CD8-positive, alpha-beta T cell (primary cell): ENCODE measurements at regions of chr15 and their contacts with region 1.

Region 1: GRCh38 chr15:90320061-90320884 is 31.8 kb upstream of the ZNF774 start:
- DNase-seq: peak; percentile 31 to 85 (median 64)
- ATAC-seq: peak; percentile 99
- H3K4me3 ChIP-seq: no peak overlapping the region
- H3K4me3 Mint-ChIP-seq: no peak overlapping the region
- H3K27ac ChIP-seq: no peak overlapping the region
- H3K27ac Mint-ChIP-seq: no peak overlapping the region
- H3K4me1 ChIP-seq: no peaks in the 10 kb centered on the region
- H3K4me1 Mint-ChIP-seq: peaks cover 5% of the 10 kb centered on the region
- H3K27me3 ChIP-seq: no peaks in the 10 kb centered on the region
- H3K27me3 Mint-ChIP-seq: peaks cover 3% of the 10 kb centered on the region
- CTCF ChIP-seq: peak; percentile 98

Region 2: GRCh38 chr15:89485855-89486361 is 834.4 kb before region 1 on chr15:
- CTCF ChIA-PET with region 1: no interaction called
- POLR2A ChIA-PET with region 1: no interaction called
- intact Hi-C with region 1: no loop called
- DNase-seq: no peak
- ATAC-seq: no peak
- H3K4me3 ChIP-seq: no peak overlapping the region
- H3K4me3 Mint-ChIP-seq: no peak overlapping the region
- H3K27ac ChIP-seq: no peak overlapping the region
- H3K27ac Mint-ChIP-seq: no peak overlapping the region
- H3K4me1 ChIP-seq: peaks cover 4% of the 10 kb centered on the region
- H3K4me1 Mint-ChIP-seq: peaks cover 9% of the 10 kb centered on the region
- H3K27me3 ChIP-seq: peaks cover 0 to 6% of the 10 kb centered on the region in 2 experiments
- H3K27me3 Mint-ChIP-seq: peaks cover 56% of the 10 kb centered on the region
- CTCF ChIP-seq: no peak

Region 3: DNA sequence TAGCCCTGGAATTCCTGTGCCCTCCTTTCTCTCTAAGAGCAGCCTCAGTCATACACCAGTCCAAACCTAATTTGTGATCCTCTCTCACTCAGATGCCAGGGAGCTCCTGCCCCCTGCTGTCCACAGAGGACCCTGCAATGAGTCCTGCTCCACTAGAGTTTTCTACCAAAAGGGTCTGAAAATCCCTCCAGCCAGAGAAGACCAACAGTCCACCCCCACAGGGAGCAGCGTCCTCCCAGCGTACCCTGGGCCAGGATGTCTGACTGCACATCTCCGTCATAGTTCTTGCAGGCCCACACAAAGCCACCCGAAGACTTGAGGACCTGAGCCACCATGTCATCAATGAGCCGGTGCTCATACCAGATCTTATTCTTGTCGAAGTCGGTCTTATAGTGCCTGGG is 233.4 kb before region 1 on chr15:
- CTCF ChIA-PET with region 1: no interaction called
- POLR2A ChIA-PET with region 1: no interaction called
- intact Hi-C with region 1: no loop called
- DNase-seq: peak in 8 of 9 experiments; percentile 27 to 64 (median 48)
- ATAC-seq: peak; percentile 91
- H3K4me3 ChIP-seq: no peak overlapping the region
- H3K4me3 Mint-ChIP-seq: no peak overlapping the region
- H3K27ac ChIP-seq: no peak overlapping the region
- H3K27ac Mint-ChIP-seq: peak overlapping the region; percentile 70
- H3K4me1 ChIP-seq: no peaks in the 10 kb centered on the region
- H3K4me1 Mint-ChIP-seq: peaks cover 4% of the 10 kb centered on the region
- H3K27me3 ChIP-seq: no peaks in the 10 kb centered on the region
- H3K27me3 Mint-ChIP-seq: no peaks in the 10 kb centered on the region
- CTCF ChIP-seq: peak; percentile 59

Region 4: DNA sequence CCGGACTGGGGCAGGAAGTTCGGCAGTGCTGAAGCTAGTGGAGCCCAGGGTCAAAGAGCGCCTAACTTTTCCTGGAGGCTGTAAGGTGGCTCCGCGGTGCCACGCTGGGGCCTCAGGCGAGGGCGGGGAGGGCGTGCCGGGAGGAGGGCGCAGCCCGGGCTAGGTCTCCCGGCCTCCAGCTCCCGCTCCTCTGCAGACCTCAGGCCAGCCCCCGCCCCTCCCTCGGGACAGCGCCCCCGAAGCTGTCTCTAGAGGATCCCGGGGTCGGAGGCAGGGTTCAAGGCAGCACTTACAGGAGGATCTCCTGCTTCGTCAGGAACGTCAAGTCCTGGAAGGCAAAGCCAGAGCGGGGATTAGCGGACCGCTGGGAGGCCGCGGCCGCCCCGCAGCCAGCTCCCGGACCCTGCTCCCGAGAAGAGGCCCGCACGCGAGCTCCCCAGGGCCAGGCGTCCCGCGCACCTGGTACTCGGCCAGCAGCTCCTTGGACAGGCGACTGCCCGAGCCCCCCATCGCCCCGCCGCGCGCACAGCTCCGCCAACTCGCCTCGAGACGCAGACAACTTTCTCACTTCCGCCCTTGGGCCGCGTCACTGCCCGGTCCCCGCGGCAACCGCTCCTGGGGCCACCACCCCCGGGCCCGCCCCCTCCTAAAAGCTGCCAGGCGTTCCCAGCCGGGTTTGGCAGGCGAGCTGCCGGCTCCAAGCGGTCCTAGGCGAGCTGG is 86.7 kb before region 1 on chr15 and contains the start of gene CIB1:
- CTCF ChIA-PET with region 1: no interaction called
- POLR2A ChIA-PET with region 1: no interaction called
- intact Hi-C with region 1: no loop called
- DNase-seq: peak in 8 of 9 experiments; percentile 32 to 98 (median 94)
- ATAC-seq: peak; percentile 76
- H3K4me3 ChIP-seq: peak within 1 kb of the TSS; percentile 73 to 86
- H3K4me3 Mint-ChIP-seq: peak within 1 kb of the TSS; percentile 94
- H3K27ac ChIP-seq: peak within 1 kb of the TSS; percentile 93
- H3K27ac Mint-ChIP-seq: peak within 1 kb of the TSS; percentile 98
- H3K4me1 ChIP-seq: peaks cover 47% of the 10 kb centered on the region
- H3K4me1 Mint-ChIP-seq: peaks cover 60% of the 10 kb centered on the region
- H3K27me3 ChIP-seq: no peaks in the 10 kb centered on the region
- H3K27me3 Mint-ChIP-seq: no peaks in the 10 kb centered on the region
- CTCF ChIP-seq: no peak
- total RNA-seq, gene CIB1: 251 to 268 TPM

Region 5: DNA sequence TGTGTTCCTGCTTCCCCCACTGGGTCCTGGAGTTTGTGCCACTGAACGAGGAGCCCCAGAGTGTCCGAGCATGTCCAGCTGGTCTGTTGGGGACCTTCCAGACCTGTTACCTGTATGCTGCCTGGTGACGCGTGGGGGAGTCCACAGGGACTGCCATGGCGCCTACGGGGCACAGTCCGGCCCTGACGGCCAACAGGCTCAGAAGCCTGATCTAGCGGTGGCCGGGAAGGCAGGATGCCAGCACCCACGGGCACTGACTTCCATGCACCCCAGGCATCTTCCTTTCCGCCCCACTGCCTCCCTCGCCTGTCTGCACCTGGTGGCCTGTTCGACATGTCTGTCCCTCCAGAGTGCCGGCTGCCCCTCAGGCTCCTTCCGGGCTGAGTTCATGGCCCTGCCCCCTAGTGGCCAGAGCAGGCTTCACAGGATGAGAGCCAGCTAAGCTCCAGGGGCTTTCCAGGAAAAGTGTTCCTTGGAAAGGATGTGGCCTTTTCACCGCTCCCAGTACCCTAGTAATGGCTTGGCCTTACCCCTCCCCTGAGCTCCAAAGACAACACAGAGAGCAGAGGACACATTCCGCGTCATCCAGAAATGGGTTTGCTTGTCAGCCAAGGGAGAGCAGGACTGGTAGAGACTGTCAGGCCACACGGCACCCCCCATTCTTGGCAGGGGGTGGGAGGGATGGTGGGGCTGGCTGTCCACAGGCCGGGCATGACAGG is 19.1 kb before region 1 on chr15:
- CTCF ChIA-PET with region 1: interaction called, 54 read pairs
- POLR2A ChIA-PET with region 1: no interaction called
- intact Hi-C with region 1: no loop called
- DNase-seq: peak; percentile 18 to 72 (median 61)
- ATAC-seq: peak; percentile 49
- H3K4me3 ChIP-seq: no peak overlapping the region
- H3K4me3 Mint-ChIP-seq: no peak overlapping the region
- H3K27ac ChIP-seq: no peak overlapping the region
- H3K27ac Mint-ChIP-seq: no peak overlapping the region
- H3K4me1 ChIP-seq: peaks cover 4% of the 10 kb centered on the region
- H3K4me1 Mint-ChIP-seq: peaks cover 9% of the 10 kb centered on the region
- H3K27me3 ChIP-seq: no peaks in the 10 kb centered on the region
- H3K27me3 Mint-ChIP-seq: no peaks in the 10 kb centered on the region
- CTCF ChIP-seq: peak; percentile 81

Region 6: GRCh38 chr15:90345857-90346256 is 25.6 kb after region 1 on chr15:
- CTCF ChIA-PET with region 1: interaction called, 14 read pairs
- POLR2A ChIA-PET with region 1: no interaction called
- intact Hi-C with region 1: no loop called
- DNase-seq: no peak
- ATAC-seq: no peak
- H3K4me3 ChIP-seq: no peak overlapping the region
- H3K4me3 Mint-ChIP-seq: no peak overlapping the region
- H3K27ac ChIP-seq: no peak overlapping the region
- H3K27ac Mint-ChIP-seq: no peak overlapping the region
- H3K4me1 ChIP-seq: peaks cover 10% of the 10 kb centered on the region
- H3K4me1 Mint-ChIP-seq: peaks cover 12% of the 10 kb centered on the region
- H3K27me3 ChIP-seq: no peaks in the 10 kb centered on the region
- H3K27me3 Mint-ChIP-seq: no peaks in the 10 kb centered on the region
- CTCF ChIP-seq: no peak

Region 7: DNA sequence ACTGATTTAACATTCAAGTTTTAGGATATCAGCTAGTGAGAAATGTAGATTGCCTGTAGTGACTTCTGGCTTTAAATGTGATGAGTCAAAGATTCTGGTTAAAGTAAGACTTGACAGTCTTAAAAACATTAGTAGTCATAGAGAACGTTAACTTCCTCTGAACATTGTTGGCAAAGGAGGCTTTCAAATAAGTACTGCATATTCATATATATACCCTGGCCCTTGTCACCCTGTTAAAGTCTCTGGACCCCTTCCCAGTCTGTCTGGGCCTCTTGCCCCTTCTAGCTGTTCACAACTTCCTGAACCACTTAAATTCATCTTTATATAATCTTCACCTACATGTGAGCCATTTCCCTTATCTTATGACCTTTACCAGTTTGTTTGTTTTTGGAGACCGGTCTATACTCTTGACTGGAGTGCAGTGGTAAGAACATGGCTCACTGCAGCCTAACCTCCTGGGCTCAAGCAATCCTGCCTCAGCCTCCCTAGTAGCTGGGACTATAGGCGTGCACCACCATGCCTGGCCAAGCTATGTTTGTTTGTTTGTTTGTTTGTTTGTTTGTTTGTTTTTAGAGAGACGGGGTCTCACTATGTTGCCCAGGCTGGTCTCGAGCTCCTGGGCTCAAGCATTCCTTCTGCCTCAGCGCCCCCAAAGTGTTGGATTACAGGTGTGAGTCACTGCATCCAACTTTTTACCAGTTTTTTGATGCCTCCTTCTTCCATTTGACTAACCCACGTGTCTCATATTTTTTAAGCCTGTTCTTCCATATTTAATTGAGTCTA is 145.1 kb after region 1 on chr15:
- CTCF ChIA-PET with region 1: interaction called, 13 read pairs
- POLR2A ChIA-PET with region 1: no interaction called
- intact Hi-C with region 1: no loop called
- DNase-seq: no peak
- ATAC-seq: no peak
- H3K4me3 ChIP-seq: no peak overlapping the region
- H3K4me3 Mint-ChIP-seq: no peak overlapping the region
- H3K27ac ChIP-seq: no peak overlapping the region
- H3K27ac Mint-ChIP-seq: no peak overlapping the region
- H3K4me1 ChIP-seq: no peaks in the 10 kb centered on the region
- H3K4me1 Mint-ChIP-seq: peaks cover 8% of the 10 kb centered on the region
- H3K27me3 ChIP-seq: no peaks in the 10 kb centered on the region
- H3K27me3 Mint-ChIP-seq: no peaks in the 10 kb centered on the region
- CTCF ChIP-seq: no peak

Region 8: GRCh38 chr15:90512981-90513380 is 192.7 kb after region 1 on chr15:
- CTCF ChIA-PET with region 1: interaction called, 14 read pairs
- POLR2A ChIA-PET with region 1: no interaction called
- intact Hi-C with region 1: no loop called
- DNase-seq: no peak
- ATAC-seq: no peak
- H3K4me3 ChIP-seq: no peak overlapping the region
- H3K4me3 Mint-ChIP-seq: no peak overlapping the region
- H3K27ac ChIP-seq: no peak overlapping the region
- H3K27ac Mint-ChIP-seq: no peak overlapping the region
- H3K4me1 ChIP-seq: peaks cover 5% of the 10 kb centered on the region
- H3K4me1 Mint-ChIP-seq: peaks cover 9% of the 10 kb centered on the region
- H3K27me3 ChIP-seq: no peaks in the 10 kb centered on the region
- H3K27me3 Mint-ChIP-seq: no peaks in the 10 kb centered on the region
- CTCF ChIP-seq: no peak

Region 9: DNA sequence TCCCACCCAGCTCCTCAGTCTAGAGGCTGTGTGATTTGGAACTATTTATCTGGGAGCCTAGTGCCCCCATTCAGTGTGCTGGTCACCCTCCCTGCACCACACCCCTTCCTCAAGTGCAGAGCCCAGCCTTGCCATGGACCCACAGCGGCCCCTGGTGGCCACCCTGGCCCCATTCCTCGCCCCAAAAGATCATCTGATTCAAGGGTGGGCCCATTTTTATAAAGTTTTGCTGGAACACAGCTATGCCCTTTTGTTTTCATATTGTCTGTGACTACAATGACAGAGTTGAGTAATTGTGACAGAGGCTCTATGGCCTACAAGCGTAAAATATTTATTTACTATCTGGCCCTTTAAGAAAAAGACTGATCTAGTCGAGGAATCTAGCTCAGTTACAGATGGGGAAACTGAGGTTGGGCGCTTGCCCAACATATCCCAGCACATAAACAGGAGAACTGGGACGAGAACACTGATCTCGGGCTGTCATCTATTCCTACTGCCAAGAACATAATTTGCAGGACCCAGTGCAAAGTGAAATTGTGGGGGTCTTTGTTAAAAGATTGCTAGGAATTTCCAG is 565.9 kb after region 1 on chr15:
- CTCF ChIA-PET with region 1: interaction called, 18 read pairs
- POLR2A ChIA-PET with region 1: no interaction called
- intact Hi-C with region 1: loop called (anchors 1 kb)
- DNase-seq: peak; percentile 59 to 88 (median 78)
- ATAC-seq: peak; percentile 57
- H3K4me3 ChIP-seq: no peak overlapping the region
- H3K4me3 Mint-ChIP-seq: no peak overlapping the region
- H3K27ac ChIP-seq: no peak overlapping the region
- H3K27ac Mint-ChIP-seq: no peak overlapping the region
- H3K4me1 ChIP-seq: peaks cover 10% of the 10 kb centered on the region
- H3K4me1 Mint-ChIP-seq: peaks cover 7% of the 10 kb centered on the region
- H3K27me3 ChIP-seq: peaks cover 0 to 3% of the 10 kb centered on the region in 2 experiments
- H3K27me3 Mint-ChIP-seq: peaks cover 8% of the 10 kb centered on the region
- CTCF ChIP-seq: peak; percentile 98